ENCODE measurements at regions of chr15 and their contacts with region 1.

Region 1: GRCh38 chr15:98342911-98343310 is 305.4 kb upstream of the IGF1R start:
- DNase-seq: no peak
- H3K4me3 ChIP-seq: no peak overlapping the region
- CTCF ChIP-seq: no peak
- POLR2A ChIP-seq: no peak

Region 2: GRCh38 chr15:98369081-98369716 is 26.3 kb after region 1 on chr15:
- intact Hi-C with region 1: loop called (anchors 1 kb)
- DNase-seq: no peak
- H3K4me3 ChIP-seq: no peak overlapping the region
- CTCF ChIP-seq: no peak
- POLR2A ChIP-seq: no peak

Region 3: GRCh38 chr15:98581715-98582114 is 238.8 kb after region 1 on chr15:
- intact Hi-C with region 1: no loop called
- DNase-seq: no peak
- H3K4me3 ChIP-seq: no peak overlapping the region
- CTCF ChIP-seq: no peak
- POLR2A ChIP-seq: no peak

Measured in lower leg skin (tissue), 4 donors.